Activated naive CD4-positive, alpha-beta T cell treated with anti-CD3 and anti-CD28 coated beads for 36 hours (primary cell): ENCODE measurements at regions of chr4 and their contacts with region 1.

Region 1: GRCh38 chr4:173505924-173506518 is 24.0 kb downstream of the HAND2 start:
- DNase-seq: peak; percentile 74
- H3K4me3 Mint-ChIP-seq: peak overlapping the region; percentile 12
- H3K27ac Mint-ChIP-seq: no peak overlapping the region
- H3K4me1 Mint-ChIP-seq: peaks cover 39% of the 10 kb centered on the region
- H3K27me3 Mint-ChIP-seq: peaks cover 88% of the 10 kb centered on the region

Region 2: DNA sequence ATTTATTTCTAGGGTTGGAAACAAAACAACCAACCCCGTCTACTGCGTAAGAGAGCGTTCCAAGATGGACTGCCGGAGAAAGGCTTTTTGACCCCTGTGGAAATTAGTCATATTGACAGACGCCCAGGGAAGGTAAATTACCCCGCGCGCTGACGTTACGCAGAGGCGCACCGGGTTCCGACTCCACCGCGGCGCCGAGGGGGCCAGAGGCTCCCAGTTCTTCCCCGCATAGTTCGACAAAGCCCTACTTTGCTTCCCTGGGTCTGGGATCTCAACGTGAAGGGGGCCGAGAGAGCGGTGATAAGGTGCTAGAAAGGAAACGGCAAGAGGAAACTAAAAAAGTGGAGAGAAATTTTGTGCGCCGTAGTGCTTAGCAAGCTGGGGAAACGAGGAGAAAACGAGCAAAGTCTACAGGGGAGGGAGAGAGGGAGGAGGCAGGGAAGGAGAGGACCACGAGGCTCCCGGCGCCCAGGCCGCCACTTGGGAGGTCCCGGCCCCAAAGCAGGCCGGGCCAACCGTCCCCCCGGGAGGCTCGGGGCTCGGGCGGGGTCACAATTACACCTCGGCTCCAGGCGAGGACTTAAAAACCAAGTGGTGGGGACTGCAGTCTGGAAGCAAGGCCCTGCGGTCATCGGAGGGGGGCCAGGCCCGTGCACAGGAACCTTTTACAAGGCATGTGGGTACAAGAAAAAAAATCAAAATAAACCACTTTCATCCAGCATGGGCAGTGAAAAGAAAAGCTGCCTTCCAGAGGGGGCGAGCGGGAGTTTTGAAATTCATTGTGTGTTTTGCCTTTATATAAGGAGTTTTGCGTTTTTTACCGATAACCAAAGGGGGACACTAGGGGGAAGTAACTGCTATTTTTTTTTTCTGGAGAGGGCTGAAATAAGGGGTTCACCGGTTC is 10.9 kb after region 1 on chr4:
- CTCF ChIA-PET with region 1: interaction called, 3 read pairs
- intact Hi-C with region 1: loop called (anchors 1 kb)
- DNase-seq: no peak
- H3K4me3 Mint-ChIP-seq: peak overlapping the region; percentile 1
- H3K27ac Mint-ChIP-seq: no peak overlapping the region
- H3K4me1 Mint-ChIP-seq: peaks cover 14% of the 10 kb centered on the region
- H3K27me3 Mint-ChIP-seq: peaks cover 81% of the 10 kb centered on the region

Region 3: GRCh38 chr4:173748353-173748752 is 242.3 kb after region 1 on chr4:
- CTCF ChIA-PET with region 1: no interaction called
- intact Hi-C with region 1: loop called (anchors 2 kb)
- DNase-seq: no peak
- H3K4me3 Mint-ChIP-seq: no peak overlapping the region
- H3K27ac Mint-ChIP-seq: no peak overlapping the region
- H3K4me1 Mint-ChIP-seq: no peaks in the 10 kb centered on the region
- H3K27me3 Mint-ChIP-seq: peaks cover 7% of the 10 kb centered on the region

Region 4: GRCh38 chr4:173990126-173990868 is 484.3 kb after region 1 on chr4:
- CTCF ChIA-PET with region 1: no interaction called
- intact Hi-C with region 1: loop called (anchors 5 kb)
- DNase-seq: no peak
- H3K4me3 Mint-ChIP-seq: no peak overlapping the region
- H3K27ac Mint-ChIP-seq: no peak overlapping the region
- H3K4me1 Mint-ChIP-seq: no peaks in the 10 kb centered on the region
- H3K27me3 Mint-ChIP-seq: peaks cover 4% of the 10 kb centered on the region

Region 5: GRCh38 chr4:174156239-174156826 is 650.3 kb after region 1 on chr4:
- CTCF ChIA-PET with region 1: no interaction called
- intact Hi-C with region 1: loop called (anchors 1 kb)
- DNase-seq: no peak
- H3K4me3 Mint-ChIP-seq: no peak overlapping the region
- H3K27ac Mint-ChIP-seq: no peak overlapping the region
- H3K4me1 Mint-ChIP-seq: no peaks in the 10 kb centered on the region
- H3K27me3 Mint-ChIP-seq: peaks cover 17% of the 10 kb centered on the region

Region 6: GRCh38 chr4:174282836-174283506 is 777.0 kb after region 1 on chr4:
- CTCF ChIA-PET with region 1: no interaction called
- intact Hi-C with region 1: loop called (anchors 10 kb)
- DNase-seq: peak; percentile 87
- H3K4me3 Mint-ChIP-seq: peak overlapping the region; percentile 98
- H3K27ac Mint-ChIP-seq: peak overlapping the region; percentile 99
- H3K4me1 Mint-ChIP-seq: peaks cover 55% of the 10 kb centered on the region
- H3K27me3 Mint-ChIP-seq: no peaks in the 10 kb centered on the region